SK-N-SH (cell line): ENCODE measurements at regions of chr2 and their contacts with region 1.

Region 1: GRCh38 chr2:162221064-162221463 is 22.2 kb downstream of the FAP start:
- DNase-seq: peak; percentile 61
- H3K4me3 ChIP-seq: no peak overlapping the region; a peak in 1 of 4 replicates
- H3K27ac ChIP-seq: no peak overlapping the region
- H3K4me1 ChIP-seq: no peaks in the 10 kb centered on the region; a peak in 1 of 4 replicates
- H3K27me3 ChIP-seq: no peaks in the 10 kb centered on the region
- CTCF ChIP-seq: peak; percentile 92
- EP300 ChIP-seq: no peak
- RAD21 ChIP-seq: peak; percentile 71

Region 2: GRCh38 chr2:162174746-162175145 is 46.3 kb before region 1 on chr2:
- CTCF ChIA-PET with region 1: interaction called, 11 read pairs
- POLR2A ChIA-PET with region 1: no interaction called
- DNase-seq: no peak
- H3K4me3 ChIP-seq: no peak overlapping the region
- H3K27ac ChIP-seq: no peak overlapping the region
- H3K4me1 ChIP-seq: no peaks in the 10 kb centered on the region
- H3K27me3 ChIP-seq: no peaks in the 10 kb centered on the region
- CTCF ChIP-seq: no peak
- EP300 ChIP-seq: no peak
- RAD21 ChIP-seq: no peak

Region 3: DNA sequence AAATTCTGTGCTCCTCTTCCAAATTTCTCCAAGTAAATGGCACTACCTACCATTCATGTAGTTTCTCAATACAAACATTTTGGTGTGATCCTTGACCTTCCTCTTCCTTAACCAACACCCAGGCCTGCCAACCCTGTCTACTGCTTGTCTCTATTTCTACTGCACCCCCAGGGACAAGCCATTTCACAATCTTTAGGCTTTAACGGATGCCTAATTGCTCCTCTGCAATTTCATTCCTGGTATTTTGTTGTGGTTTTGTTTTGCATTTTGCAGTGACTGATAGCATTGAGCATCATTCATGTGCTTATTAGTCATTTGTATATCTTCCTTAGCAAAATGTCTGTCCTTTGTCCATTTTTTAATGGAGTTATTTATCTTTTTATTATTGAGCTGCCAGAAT is 12.1 kb after region 1 on chr2:
- CTCF ChIA-PET with region 1: interaction called, 17 read pairs
- POLR2A ChIA-PET with region 1: no interaction called
- DNase-seq: no peak
- H3K4me3 ChIP-seq: no peak overlapping the region
- H3K27ac ChIP-seq: peak overlapping the region in 1 of 2 experiments; percentile 25; a peak in 1 of 4 replicates
- H3K4me1 ChIP-seq: peaks cover 0 to 2% of the 10 kb centered on the region in 2 experiments; a peak in 1 of 4 replicates
- H3K27me3 ChIP-seq: no peaks in the 10 kb centered on the region
- CTCF ChIP-seq: no peak
- EP300 ChIP-seq: no peak; a peak in 1 of 4 replicates
- RAD21 ChIP-seq: no peak

Region 4: GRCh38 chr2:162333968-162334367 is 112.9 kb after region 1 on chr2:
- CTCF ChIA-PET with region 1: interaction called, 12 read pairs
- POLR2A ChIA-PET with region 1: no interaction called
- DNase-seq: no peak
- H3K4me3 ChIP-seq: no peak overlapping the region
- H3K27ac ChIP-seq: no peak overlapping the region
- H3K4me1 ChIP-seq: no peaks in the 10 kb centered on the region
- H3K27me3 ChIP-seq: no peaks in the 10 kb centered on the region
- CTCF ChIP-seq: peak; percentile 58
- EP300 ChIP-seq: no peak
- RAD21 ChIP-seq: peak; percentile 28; the same call in 1 of the 2 replicates